Dorsolateral prefrontal cortex (tissue), 120 donors: ENCODE measurements at regions of chr4 and their contacts with region 1.

Region 1: GRCh38 chr4:88284439-88285234 is at the start of gene PPM1K:
- DNase-seq: peak; percentile 98 to 100 (median 99)
- H3K4me3 ChIP-seq: peak within 1 kb of the TSS; percentile 62 to 98 (median 90)
- H3K27ac ChIP-seq: peak within 1 kb of the TSS; percentile 94 to 100 (median 99)
- H3K27me3 ChIP-seq: no peaks in the 10 kb centered on the region
- CTCF ChIP-seq: peak in 41 of 56 donors; percentile 4 to 57 (median 38)
- total RNA-seq, gene PPM1K: 96.3 to 246 (median 167) TPM

Region 2: DNA sequence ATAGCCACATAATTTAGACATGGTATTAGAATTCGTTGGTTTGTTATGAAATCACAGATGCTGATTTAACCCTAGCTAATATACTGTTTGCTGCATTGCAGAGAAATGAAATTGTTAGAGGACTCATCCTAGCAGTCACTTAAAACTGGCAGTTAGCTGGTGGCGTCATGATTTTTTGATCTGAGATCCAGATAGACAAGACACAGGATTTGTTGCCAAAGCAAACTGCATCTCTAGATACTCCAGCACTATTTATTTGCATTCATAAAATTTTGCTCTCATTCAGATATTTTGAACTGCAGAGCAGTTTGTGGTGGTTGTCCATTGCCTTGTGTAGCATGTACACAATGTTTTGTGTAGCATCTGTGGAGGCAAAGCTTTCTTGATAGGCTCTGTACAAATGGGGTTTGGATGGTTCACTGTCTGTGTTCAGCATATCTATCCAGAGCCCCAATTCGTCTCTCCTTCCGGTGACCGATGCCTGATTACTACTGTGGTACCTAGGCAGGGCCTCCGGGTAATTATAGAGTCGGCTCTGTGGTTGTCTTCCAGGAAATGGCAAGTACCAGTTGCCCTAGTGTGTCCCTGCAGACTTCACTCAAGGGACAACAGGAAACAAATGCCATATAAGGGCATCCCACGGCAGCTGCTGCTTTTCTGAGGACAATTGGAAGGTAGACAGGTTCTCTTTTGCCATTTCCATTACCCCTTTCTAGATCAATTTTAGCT is 725.4 kb before region 1 on chr4:
- intact Hi-C with region 1: no loop called
- DNase-seq: peak in 1 of 10 donors; percentile 44
- H3K4me3 ChIP-seq: no peak overlapping the region
- H3K27ac ChIP-seq: no peak overlapping the region
- H3K27me3 ChIP-seq: no peaks in the 10 kb centered on the region
- CTCF ChIP-seq: no peak

Region 3: DNA sequence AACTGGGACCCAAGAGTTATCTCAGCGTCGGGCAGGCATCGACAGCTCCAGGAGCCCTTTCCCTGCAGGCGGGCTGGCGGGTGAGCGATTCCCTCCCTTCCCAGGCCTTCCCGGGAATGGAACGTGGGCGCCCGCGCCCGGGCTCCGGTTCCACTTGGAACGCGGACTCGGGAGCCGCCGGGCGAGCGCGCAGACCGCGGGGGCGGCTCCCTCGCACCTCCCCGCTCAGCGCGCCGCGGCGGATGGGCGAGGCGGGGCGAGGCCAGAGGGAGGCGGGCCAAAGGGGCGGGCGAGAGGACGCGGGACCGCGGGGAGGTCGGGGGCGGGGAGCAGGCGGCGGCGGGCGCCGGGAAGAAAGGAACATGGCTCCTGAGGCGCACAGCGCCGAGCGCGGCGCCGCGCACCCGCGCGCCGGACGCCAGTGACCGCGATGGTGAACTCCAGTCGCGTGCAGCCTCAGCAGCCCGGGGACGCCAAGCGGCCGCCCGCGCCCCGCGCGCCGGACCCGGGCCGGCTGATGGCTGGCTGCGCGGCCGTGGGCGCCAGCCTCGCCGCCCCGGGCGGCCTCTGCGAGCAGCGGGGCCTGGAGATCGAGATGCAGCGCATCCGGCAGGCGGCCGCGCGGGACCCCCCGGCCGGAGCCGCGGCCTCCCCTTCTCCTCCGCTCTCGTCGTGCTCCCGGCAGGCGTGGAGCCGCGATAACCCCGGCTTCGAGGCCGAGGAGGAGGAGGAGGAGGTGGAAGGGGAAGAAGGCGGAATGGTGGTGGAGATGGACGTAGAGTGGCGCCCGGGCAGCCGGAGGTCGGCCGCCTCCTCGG is 277.1 kb before region 1 on chr4 and contains the start of gene PKD2:
- intact Hi-C with region 1: loop called in 1 of 2 experiments (anchors 5 kb)
- DNase-seq: peak; percentile 76 to 93 (median 84)
- H3K4me3 ChIP-seq: peak within 1 kb of the TSS; percentile 64 to 94 (median 84)
- H3K27ac ChIP-seq: peak within 1 kb of the TSS; percentile 64 to 97 (median 91)
- H3K27me3 ChIP-seq: no peaks in the 10 kb centered on the region
- CTCF ChIP-seq: peak in 11 of 56 donors; percentile 9 to 30 (median 16)
- total RNA-seq, gene PKD2: 29.7 to 60.9 (median 40.7) TPM

Region 4: GRCh38 chr4:88341227-88342192 is 56.9 kb after region 1 on chr4:
- intact Hi-C with region 1: no loop called
- DNase-seq: peak in 6 of 10 donors; percentile 7 to 70 (median 48)
- H3K4me3 ChIP-seq: no peak overlapping the region
- H3K27ac ChIP-seq: peak overlapping the region in 49 of 59 donors; percentile 8 to 84 (median 62)
- H3K27me3 ChIP-seq: no peaks in the 10 kb centered on the region
- CTCF ChIP-seq: no peak

Region 5: DNA sequence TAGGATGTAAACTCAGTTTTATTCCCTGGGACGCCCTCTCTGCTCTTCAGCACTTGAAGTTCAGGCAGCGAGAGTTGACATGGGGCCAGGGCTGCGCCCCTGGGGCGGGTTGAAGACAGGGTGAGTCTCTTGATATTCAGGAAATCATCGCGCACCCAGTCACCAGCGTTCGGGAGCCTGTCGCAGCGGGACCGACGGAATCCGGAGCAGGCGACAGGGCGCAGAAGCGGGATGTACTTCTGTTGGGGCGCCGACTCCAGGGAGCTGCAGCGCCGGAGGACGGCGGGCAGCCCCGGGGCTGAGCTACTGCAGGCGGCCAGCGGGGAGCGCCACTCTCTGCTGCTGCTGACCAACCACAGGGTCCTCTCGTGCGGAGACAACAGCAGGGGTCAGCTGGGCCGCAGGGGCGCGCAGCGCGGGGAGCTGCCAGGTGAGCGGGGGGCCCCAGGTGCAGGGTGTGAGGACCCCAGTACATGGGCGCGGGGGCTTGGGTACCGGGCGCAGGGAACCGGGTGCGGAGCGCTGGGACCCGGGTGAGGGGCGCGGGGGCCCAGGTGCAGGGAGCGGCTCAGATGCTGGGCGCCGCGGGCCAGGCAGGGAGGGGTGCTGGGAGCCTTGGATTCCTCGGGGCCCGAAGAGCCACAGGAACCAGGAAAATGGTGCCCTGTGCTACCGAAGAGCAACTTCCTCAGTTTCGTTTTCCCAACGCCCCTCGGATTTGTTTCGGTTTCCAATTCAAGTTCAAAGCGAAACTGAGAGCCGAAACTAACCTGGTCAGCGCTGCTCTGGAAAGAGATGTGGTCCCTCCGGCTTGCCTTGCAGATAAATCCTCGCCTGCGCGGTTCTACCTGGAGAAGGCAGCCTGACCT is 94.3 kb after region 1 on chr4 and contains the start of gene HERC6:
- intact Hi-C with region 1: loop called (anchors 2 kb)
- DNase-seq: peak; percentile 12 to 84 (median 72)
- H3K4me3 ChIP-seq: peak within 1 kb of the TSS; percentile 63 to 99 (median 91)
- H3K27ac ChIP-seq: peak within 1 kb of the TSS; percentile 70 to 99 (median 92)
- H3K27me3 ChIP-seq: no peaks in the 10 kb centered on the region
- CTCF ChIP-seq: peak in 54 of 56 donors; percentile 30 to 79 (median 64)
- total RNA-seq, gene HERC6: 8.9 to 84.3 (median 23.3) TPM

Region 6: DNA sequence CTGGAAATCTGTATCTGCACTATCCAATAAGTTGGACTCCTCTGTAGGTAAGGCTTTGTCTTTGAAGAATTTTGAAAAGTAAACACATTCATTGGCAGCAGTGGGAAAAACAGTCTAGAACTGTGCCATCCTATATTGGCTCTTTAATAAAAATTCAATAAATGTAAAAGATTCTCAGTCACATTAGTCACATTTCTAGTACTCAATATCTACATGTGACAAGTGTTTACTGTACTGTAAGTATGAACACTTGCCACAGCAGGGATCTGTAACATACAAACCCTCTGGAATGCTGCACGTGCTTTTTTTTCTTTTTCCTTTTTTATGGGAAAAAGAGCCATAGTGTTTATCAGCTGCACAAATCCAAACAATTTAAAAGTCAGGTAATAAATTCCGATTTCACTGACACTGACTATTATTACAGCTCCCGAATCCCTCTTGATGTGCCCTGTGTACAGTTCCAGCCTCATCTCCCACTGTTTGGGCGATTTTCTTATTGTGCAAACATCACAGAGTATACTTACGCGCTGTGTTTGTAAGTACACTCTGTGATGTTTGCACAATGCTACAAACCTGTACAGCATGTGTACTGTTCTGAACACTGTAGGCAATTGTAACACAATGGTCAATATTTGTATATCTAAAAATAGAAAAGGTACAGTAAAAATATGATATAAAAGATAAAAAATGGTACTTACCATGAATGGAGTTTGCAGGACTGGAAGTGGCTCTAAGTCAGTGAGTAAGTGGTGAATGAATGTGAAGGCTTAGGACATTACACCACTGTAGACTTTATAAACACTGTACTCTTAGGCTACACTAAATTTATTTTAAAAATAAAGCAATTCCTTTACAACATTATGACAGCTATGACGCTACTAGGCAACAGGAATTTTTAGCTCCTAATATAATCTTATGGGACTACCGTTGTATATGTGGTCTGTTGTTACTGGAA is 230.2 kb after region 1 on chr4:
- intact Hi-C with region 1: loop called in 1 of 2 experiments (anchors 10 kb)
- DNase-seq: no peak
- H3K4me3 ChIP-seq: peak overlapping the region in 22 of 59 donors; percentile 3 to 46 (median 23)
- H3K27ac ChIP-seq: peak overlapping the region in 1 of 59 donors; percentile 68
- H3K27me3 ChIP-seq: no peaks in the 10 kb centered on the region
- CTCF ChIP-seq: no peak

Region 7: GRCh38 chr4:88591787-88592599 is 307.4 kb after region 1 on chr4 and contains the start of gene HERC3:
- intact Hi-C with region 1: loop called in 1 of 2 experiments (anchors 5 kb)
- DNase-seq: peak; percentile 79 to 98 (median 90)
- H3K4me3 ChIP-seq: peak within 1 kb of the TSS; percentile 65 to 98 (median 93)
- H3K27ac ChIP-seq: peak within 1 kb of the TSS; percentile 81 to 99 (median 95)
- H3K27me3 ChIP-seq: no peaks in the 10 kb centered on the region
- CTCF ChIP-seq: peak in 30 of 56 donors; percentile 7 to 38 (median 22)
- total RNA-seq, gene HERC3: 37.3 to 96.2 (median 67.6) TPM